Activated CD8-positive, alpha-beta T cell treated with anti-CD3 and anti-CD28 coated beads for 36 hours (primary cell): ENCODE measurements at regions of chr5 and their contacts with region 1.

Region 1: GRCh38 chr5:149667084-149667828 is 62.9 kb upstream of the PPARGC1B start:
- DNase-seq: peak; percentile 54
- ATAC-seq: peak; percentile 66
- H3K4me3 Mint-ChIP-seq: no peak overlapping the region
- H3K27ac Mint-ChIP-seq: no peak overlapping the region
- H3K4me1 Mint-ChIP-seq: no peaks in the 10 kb centered on the region
- H3K27me3 Mint-ChIP-seq: peaks cover 3% of the 10 kb centered on the region
- CTCF ChIP-seq: peak; percentile 86

Region 2: DNA sequence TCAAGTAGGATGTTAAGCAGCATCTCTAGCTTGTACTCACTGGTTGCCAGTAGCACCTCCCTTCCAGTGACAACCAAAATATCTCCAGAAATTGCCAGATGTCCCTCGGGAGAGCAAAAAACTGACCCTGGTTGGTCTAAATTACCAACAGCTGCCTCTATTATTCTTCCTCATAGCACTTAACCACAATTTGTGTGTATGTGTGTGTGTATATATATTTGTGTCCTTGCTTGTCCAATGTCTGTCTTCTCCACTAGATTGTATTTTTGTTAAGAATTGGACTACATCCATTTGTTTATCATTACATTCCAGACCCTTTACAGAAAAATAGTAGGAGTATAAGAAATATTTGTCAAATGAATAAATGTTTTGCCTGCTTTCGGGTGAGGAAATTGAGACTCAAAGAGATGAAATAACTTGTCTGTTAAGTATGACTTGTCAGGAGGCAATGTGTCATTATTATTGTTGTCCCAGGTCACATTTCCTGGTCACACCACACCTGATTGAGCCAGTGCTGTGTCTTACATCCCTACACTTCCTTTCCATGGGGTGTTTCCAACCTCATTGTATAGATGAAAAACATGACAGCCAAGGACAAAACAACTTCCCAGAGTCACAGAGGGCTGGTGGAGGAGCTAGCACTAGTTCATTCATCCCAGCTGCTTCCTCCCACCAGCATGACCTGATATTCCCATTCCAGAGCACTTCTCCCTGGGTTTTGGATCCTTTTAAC is 333.4 kb before region 1 on chr5:
- CTCF ChIA-PET with region 1: no interaction called
- POLR2A ChIA-PET with region 1: no interaction called
- intact Hi-C with region 1: no loop called
- DNase-seq: no peak
- ATAC-seq: no peak
- H3K4me3 Mint-ChIP-seq: no peak overlapping the region
- H3K27ac Mint-ChIP-seq: no peak overlapping the region
- H3K4me1 Mint-ChIP-seq: no peaks in the 10 kb centered on the region
- H3K27me3 Mint-ChIP-seq: no peaks in the 10 kb centered on the region
- CTCF ChIP-seq: no peak

Region 3: GRCh38 chr5:149656576-149657182 is 10.6 kb before region 1 on chr5:
- CTCF ChIA-PET with region 1: interaction called, 19 read pairs
- POLR2A ChIA-PET with region 1: interaction called, 3 read pairs
- intact Hi-C with region 1: no loop called
- DNase-seq: peak; percentile 63
- ATAC-seq: no peak
- H3K4me3 Mint-ChIP-seq: no peak overlapping the region
- H3K27ac Mint-ChIP-seq: no peak overlapping the region
- H3K4me1 Mint-ChIP-seq: no peaks in the 10 kb centered on the region
- H3K27me3 Mint-ChIP-seq: peaks cover 2% of the 10 kb centered on the region
- CTCF ChIP-seq: peak; percentile 87

Region 4: GRCh38 chr5:149687486-149688168 is 20.4 kb after region 1 on chr5:
- CTCF ChIA-PET with region 1: interaction called, 16 read pairs
- POLR2A ChIA-PET with region 1: no interaction called
- intact Hi-C with region 1: no loop called
- DNase-seq: no peak
- ATAC-seq: no peak
- H3K4me3 Mint-ChIP-seq: no peak overlapping the region
- H3K27ac Mint-ChIP-seq: no peak overlapping the region
- H3K4me1 Mint-ChIP-seq: no peaks in the 10 kb centered on the region
- H3K27me3 Mint-ChIP-seq: peaks cover 34% of the 10 kb centered on the region
- CTCF ChIP-seq: no peak

Region 5: GRCh38 chr5:149775785-149776184 is 108.5 kb after region 1 on chr5:
- CTCF ChIA-PET with region 1: interaction called, 10 read pairs
- POLR2A ChIA-PET with region 1: no interaction called
- intact Hi-C with region 1: no loop called
- DNase-seq: peak; percentile 29
- ATAC-seq: no peak
- H3K4me3 Mint-ChIP-seq: no peak overlapping the region
- H3K27ac Mint-ChIP-seq: no peak overlapping the region
- H3K4me1 Mint-ChIP-seq: peaks cover 31% of the 10 kb centered on the region
- H3K27me3 Mint-ChIP-seq: no peaks in the 10 kb centered on the region
- CTCF ChIP-seq: peak; percentile 60

Region 6: GRCh38 chr5:149790276-149790675 is 123.0 kb after region 1 on chr5:
- CTCF ChIA-PET with region 1: no interaction called
- POLR2A ChIA-PET with region 1: no interaction called
- intact Hi-C with region 1: no loop called
- DNase-seq: no peak
- ATAC-seq: no peak
- H3K4me3 Mint-ChIP-seq: no peak overlapping the region
- H3K27ac Mint-ChIP-seq: no peak overlapping the region
- H3K4me1 Mint-ChIP-seq: peaks cover 12% of the 10 kb centered on the region
- H3K27me3 Mint-ChIP-seq: no peaks in the 10 kb centered on the region
- CTCF ChIP-seq: no peak

Region 7: GRCh38 chr5:149828161-149828884 is 161.1 kb after region 1 on chr5:
- CTCF ChIA-PET with region 1: interaction called, 52 read pairs
- POLR2A ChIA-PET with region 1: no interaction called
- intact Hi-C with region 1: loop called (anchors 5 kb)
- DNase-seq: peak; percentile 93
- ATAC-seq: peak; percentile 65
- H3K4me3 Mint-ChIP-seq: no peak overlapping the region
- H3K27ac Mint-ChIP-seq: peak overlapping the region; percentile 52
- H3K4me1 Mint-ChIP-seq: peaks cover 11% of the 10 kb centered on the region
- H3K27me3 Mint-ChIP-seq: no peaks in the 10 kb centered on the region
- CTCF ChIP-seq: peak; percentile 88